ENCODE measurements at regions of chr11 and their contacts with region 1.

Region 1: GRCh38 chr11:116499396-116500003 is 273.3 kb downstream of the BUD13 start:
- DNase-seq: peak; percentile 67
- H3K4me3 ChIP-seq: no peak overlapping the region; a peak in 1 of 4 replicates
- H3K27ac ChIP-seq: peak overlapping the region in 1 of 2 experiments; percentile 97; a peak in 2 of 4 replicates
- H3K4me1 ChIP-seq: peaks cover 0 to 67% of the 10 kb centered on the region in 2 experiments; a peak in 2 of 4 replicates
- H3K27me3 ChIP-seq: peaks cover 12% of the 10 kb centered on the region; the same call in 1 of the 2 replicates
- CTCF ChIP-seq: peak; percentile 70
- EP300 ChIP-seq: no peak
- RAD21 ChIP-seq: peak; percentile 76

Region 2: GRCh38 chr11:116217006-116217405 is 282.5 kb before region 1 on chr11:
- CTCF ChIA-PET with region 1: interaction called, 10 read pairs
- POLR2A ChIA-PET with region 1: interaction called, 5 read pairs
- DNase-seq: no peak
- H3K4me3 ChIP-seq: no peak overlapping the region
- H3K27ac ChIP-seq: peak overlapping the region in 1 of 2 experiments; percentile 64; a peak in 1 of 4 replicates
- H3K4me1 ChIP-seq: peaks cover 0 to 25% of the 10 kb centered on the region in 2 experiments; a peak in 1 of 4 replicates
- H3K27me3 ChIP-seq: no peaks in the 10 kb centered on the region
- CTCF ChIP-seq: peak; percentile 68
- EP300 ChIP-seq: no peak
- RAD21 ChIP-seq: peak; percentile 62

Region 3: DNA sequence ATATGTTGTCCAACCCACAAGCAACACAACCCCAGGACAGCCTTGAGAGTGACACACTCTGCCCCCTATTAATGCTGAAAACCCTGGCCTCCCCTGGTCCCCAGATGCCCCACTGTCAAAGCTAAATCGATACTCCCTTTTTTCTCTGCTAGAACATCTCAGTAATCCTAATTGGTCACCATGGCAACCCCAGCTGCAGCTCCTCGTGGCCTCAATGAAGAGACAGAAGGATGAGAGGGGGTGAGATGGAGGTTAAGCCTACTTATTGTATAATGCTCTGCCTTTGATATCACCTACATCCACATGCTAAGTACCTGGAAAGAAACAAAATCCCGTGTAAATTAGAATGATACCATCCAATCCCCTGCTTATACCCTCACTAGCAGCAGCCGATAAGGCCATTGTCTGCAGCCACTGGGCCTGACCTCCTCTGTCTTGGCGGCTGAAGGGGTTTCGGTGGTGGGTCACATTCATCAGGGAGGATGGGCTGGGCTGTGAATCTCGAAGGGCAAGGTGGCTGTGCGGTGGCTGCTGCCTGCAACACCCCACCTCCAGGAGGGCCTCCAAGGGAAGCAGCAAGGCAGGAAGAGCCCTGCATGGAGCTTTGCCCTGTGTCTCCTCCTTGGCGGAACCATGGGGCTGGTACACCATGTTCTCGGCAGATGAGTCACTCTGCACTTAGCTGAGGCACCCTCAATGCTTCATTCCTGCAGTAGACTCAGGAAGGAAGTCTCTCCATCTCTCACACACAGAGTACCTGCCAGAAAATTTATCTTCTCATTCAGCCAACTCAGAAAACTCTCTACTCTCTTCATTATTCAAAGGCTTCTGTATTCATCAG is 126.2 kb before region 1 on chr11:
- CTCF ChIA-PET with region 1: interaction called, 22 read pairs
- POLR2A ChIA-PET with region 1: interaction called, 17 read pairs
- DNase-seq: no peak
- H3K4me3 ChIP-seq: no peak overlapping the region
- H3K27ac ChIP-seq: peak overlapping the region in 1 of 2 experiments; percentile 97; a peak in 2 of 4 replicates
- H3K4me1 ChIP-seq: peaks cover 0 to 47% of the 10 kb centered on the region in 2 experiments; a peak in 2 of 4 replicates
- H3K27me3 ChIP-seq: no peaks in the 10 kb centered on the region
- CTCF ChIP-seq: no peak
- EP300 ChIP-seq: no peak
- RAD21 ChIP-seq: no peak

Region 4: DNA sequence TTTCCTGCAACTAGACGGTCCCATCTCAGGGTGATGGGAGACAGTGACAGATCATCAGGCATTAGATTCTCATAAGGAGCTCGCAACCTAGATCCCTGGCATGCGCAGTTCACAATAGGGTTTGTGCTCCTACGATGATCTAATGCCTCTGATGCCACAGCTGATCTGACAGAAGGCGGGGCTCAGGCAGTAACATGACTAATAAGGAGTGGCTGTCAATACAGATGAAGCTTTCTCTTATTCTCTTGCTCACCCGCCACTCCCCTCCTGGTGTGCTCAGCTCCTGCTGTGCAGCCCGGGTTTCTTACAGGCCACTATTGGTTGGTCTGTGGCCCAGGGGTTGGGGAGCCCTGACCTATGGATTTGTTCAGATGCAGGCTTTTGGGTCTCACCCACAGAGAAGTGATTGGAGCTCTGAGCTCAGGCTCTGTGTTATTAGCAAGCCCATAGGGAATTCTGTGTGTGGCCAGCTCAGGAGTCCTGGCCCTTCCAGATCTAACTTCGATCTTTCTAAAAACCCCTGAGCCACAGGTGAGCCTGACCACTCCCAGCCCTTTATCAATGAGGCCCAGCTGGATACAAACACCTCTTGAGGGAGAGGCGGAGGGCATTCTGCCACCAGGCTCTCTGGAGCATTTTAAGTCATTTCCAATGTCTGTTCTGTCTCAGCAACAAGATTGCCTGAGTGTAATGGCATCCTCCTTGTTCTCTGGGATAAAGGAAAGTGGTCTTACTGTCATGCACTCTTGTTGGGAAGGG is 78.6 kb before region 1 on chr11:
- CTCF ChIA-PET with region 1: interaction called, 109 read pairs
- POLR2A ChIA-PET with region 1: interaction called, 237 read pairs
- DNase-seq: no peak
- H3K4me3 ChIP-seq: no peak overlapping the region
- H3K27ac ChIP-seq: peak overlapping the region in 1 of 2 experiments; percentile 100; a peak in 2 of 4 replicates
- H3K4me1 ChIP-seq: peaks cover 0 to 71% of the 10 kb centered on the region in 2 experiments; a peak in 2 of 4 replicates
- H3K27me3 ChIP-seq: no peaks in the 10 kb centered on the region
- CTCF ChIP-seq: no peak
- EP300 ChIP-seq: no peak
- RAD21 ChIP-seq: no peak

Region 5: DNA sequence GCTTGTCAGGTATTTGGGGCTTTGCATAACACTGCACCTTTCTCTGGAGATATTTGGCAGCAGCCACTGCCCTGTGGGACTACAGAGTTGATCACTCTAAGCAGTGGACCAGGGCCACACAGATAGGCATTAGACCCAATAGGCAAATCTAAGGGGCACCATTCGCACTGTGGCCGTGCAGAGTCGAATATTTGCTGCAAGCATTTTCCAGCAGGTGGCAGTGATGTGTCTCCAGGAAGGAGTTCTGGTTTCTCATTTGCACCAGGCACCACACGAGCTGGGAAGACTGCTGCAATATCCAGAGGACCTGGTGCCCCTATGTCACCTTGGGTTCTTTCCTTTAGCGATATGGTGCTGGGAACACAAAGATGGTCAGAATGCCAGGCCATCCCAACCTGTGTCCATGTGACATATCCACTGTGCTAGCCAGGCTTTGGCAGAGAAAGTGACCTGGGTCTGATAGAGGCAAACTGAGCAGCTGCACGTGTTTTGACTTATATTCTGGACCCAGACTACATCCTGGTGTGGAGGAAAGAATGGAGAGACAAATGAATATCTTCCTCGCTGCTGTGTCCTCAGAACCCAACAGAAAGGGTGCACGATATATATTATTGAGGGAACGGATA is 45.4 kb before region 1 on chr11:
- CTCF ChIA-PET with region 1: interaction called, 56 read pairs
- POLR2A ChIA-PET with region 1: interaction called, 31 read pairs
- DNase-seq: peak; percentile 37
- H3K4me3 ChIP-seq: no peak overlapping the region
- H3K27ac ChIP-seq: peak overlapping the region in 1 of 2 experiments; percentile 99; a peak in 2 of 4 replicates
- H3K4me1 ChIP-seq: peaks cover 0 to 46% of the 10 kb centered on the region in 2 experiments; a peak in 1 of 4 replicates
- H3K27me3 ChIP-seq: no peaks in the 10 kb centered on the region
- CTCF ChIP-seq: peak; percentile 62
- EP300 ChIP-seq: no peak
- RAD21 ChIP-seq: peak; percentile 80

Region 6: GRCh38 chr11:116481126-116481644 is 18.3 kb before region 1 on chr11:
- CTCF ChIA-PET with region 1: interaction called, 10 read pairs
- POLR2A ChIA-PET with region 1: interaction called, 4 read pairs
- DNase-seq: no peak
- H3K4me3 ChIP-seq: no peak overlapping the region
- H3K27ac ChIP-seq: no peak overlapping the region
- H3K4me1 ChIP-seq: peaks cover 0 to 6% of the 10 kb centered on the region in 2 experiments; a peak in 1 of 4 replicates
- H3K27me3 ChIP-seq: peaks cover 6% of the 10 kb centered on the region; the same call in 1 of the 2 replicates
- CTCF ChIP-seq: no peak
- EP300 ChIP-seq: no peak
- RAD21 ChIP-seq: no peak